Activated CD4-positive, alpha-beta T cell treated with anti-CD3 and anti-CD28 coated beads, Interleukin-2, amount 10 ng/mL, durations not matched to agents 24 days and 14 days (primary cell): ENCODE measurements at regions of chr3 and their contacts with region 1.

Region 1: GRCh38 chr3:162538906-162539305 is 1042.3 kb downstream of the OTOL1 start:
- DNase-seq: no peak
- H3K4me3 Mint-ChIP-seq: no peak overlapping the region
- H3K27ac Mint-ChIP-seq: no peak overlapping the region
- H3K4me1 Mint-ChIP-seq: no peaks in the 10 kb centered on the region
- H3K27me3 Mint-ChIP-seq: no peaks in the 10 kb centered on the region

Region 2: DNA sequence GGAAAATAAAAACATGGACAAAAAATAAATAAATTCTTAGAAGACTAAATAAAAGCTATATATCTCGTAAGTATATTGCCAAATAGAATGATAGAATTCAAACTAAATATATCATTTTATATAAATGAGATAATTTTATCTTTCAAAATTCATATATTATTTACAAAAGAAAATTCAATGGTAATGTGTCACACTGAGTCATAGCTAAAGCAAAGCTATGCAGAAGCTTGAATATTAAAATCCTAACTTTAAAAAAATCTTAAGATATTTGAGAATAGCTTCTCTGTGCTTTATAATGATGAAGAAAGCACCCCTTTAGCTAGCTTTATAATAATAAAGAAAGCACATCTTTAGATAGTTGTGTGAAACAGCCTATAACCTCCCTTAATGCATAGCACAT is 31.5 kb before region 1 on chr3:
- intact Hi-C with region 1: loop called (anchors 5 kb)
- DNase-seq: no peak
- H3K4me3 Mint-ChIP-seq: no peak overlapping the region
- H3K27ac Mint-ChIP-seq: no peak overlapping the region
- H3K4me1 Mint-ChIP-seq: no peaks in the 10 kb centered on the region
- H3K27me3 Mint-ChIP-seq: no peaks in the 10 kb centered on the region